PC-3 (cell line): ENCODE measurements at regions of chr13 and their contacts with region 1.

Region 1: GRCh38 chr13:48975856-48976575 is at the start of gene FNDC3A:
- DNase-seq: peak; percentile 63
- ATAC-seq: peak; percentile 78
- H3K4me3 ChIP-seq: peak within 1 kb of the TSS; percentile 80
- H3K27ac ChIP-seq: peak within 1 kb of the TSS; percentile 93
- H3K4me1 ChIP-seq: peaks cover 14% of the 10 kb centered on the region; the same call in 1 of the 2 replicates
- H3K27me3 ChIP-seq: no peaks in the 10 kb centered on the region
- CTCF ChIP-seq: no peak
- total RNA-seq, gene FNDC3A: 13.3 and 15.6 TPM in 2 replicates

Region 2: DNA sequence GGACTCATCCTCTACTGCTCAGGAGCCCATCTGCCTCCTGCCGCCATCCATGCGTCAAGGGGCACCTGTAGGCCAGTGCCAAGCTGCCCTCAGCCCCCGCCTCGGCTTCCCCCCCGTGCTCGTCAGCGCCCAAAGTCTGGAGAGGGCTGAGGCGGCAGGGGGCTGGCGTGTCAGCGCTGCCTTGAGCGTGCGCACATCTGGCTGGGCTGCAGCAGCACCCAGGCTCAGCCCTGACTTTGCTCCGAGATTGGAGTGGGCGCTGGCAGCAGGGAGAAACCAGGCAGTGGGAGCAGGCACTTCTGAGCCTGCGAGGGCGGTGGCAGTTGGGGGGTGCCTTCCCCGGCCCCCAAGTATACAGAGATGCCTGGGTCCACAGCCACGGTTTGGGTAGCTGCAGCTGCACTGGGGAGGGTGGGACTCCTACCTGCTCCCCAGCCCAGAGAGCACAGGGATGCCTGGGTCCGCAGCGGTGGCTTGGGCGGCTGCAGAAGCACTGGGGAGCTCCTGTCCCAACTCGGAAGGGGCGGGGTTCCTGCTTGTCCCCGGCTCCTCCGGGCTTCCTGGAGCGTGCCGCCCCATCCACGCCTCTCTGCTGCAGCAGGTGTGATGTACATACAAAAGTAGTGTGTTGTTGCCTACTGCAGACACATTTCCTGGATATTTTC is 518.3 kb before region 1 on chr13:
- CTCF ChIA-PET with region 1: no interaction called
- POLR2A ChIA-PET with region 1: no interaction called
- intact Hi-C with region 1: no loop called
- DNase-seq: no peak
- ATAC-seq: no peak
- H3K4me3 ChIP-seq: no peak overlapping the region
- H3K27ac ChIP-seq: no peak overlapping the region
- H3K4me1 ChIP-seq: no peaks in the 10 kb centered on the region
- H3K27me3 ChIP-seq: no peaks in the 10 kb centered on the region
- CTCF ChIP-seq: no peak

Region 3: GRCh38 chr13:48775804-48776203 is 200.2 kb before region 1 on chr13:
- CTCF ChIA-PET with region 1: no interaction called
- POLR2A ChIA-PET with region 1: no interaction called
- intact Hi-C with region 1: loop called (anchors 5 kb)
- DNase-seq: peak; percentile 67
- ATAC-seq: no peak
- H3K4me3 ChIP-seq: no peak overlapping the region
- H3K27ac ChIP-seq: no peak overlapping the region
- H3K4me1 ChIP-seq: peaks cover 14% of the 10 kb centered on the region
- H3K27me3 ChIP-seq: no peaks in the 10 kb centered on the region
- CTCF ChIP-seq: no peak

Region 4: GRCh38 chr13:48828962-48829421 is 147.0 kb before region 1 on chr13:
- CTCF ChIA-PET with region 1: no interaction called
- POLR2A ChIA-PET with region 1: interaction called, 3 read pairs
- intact Hi-C with region 1: loop called (anchors 5 kb)
- DNase-seq: peak; percentile 64
- ATAC-seq: peak; percentile 59
- H3K4me3 ChIP-seq: no peak overlapping the region
- H3K27ac ChIP-seq: peak overlapping the region; percentile 58
- H3K4me1 ChIP-seq: peaks cover 30% of the 10 kb centered on the region
- H3K27me3 ChIP-seq: no peaks in the 10 kb centered on the region
- CTCF ChIP-seq: no peak

Region 5: DNA sequence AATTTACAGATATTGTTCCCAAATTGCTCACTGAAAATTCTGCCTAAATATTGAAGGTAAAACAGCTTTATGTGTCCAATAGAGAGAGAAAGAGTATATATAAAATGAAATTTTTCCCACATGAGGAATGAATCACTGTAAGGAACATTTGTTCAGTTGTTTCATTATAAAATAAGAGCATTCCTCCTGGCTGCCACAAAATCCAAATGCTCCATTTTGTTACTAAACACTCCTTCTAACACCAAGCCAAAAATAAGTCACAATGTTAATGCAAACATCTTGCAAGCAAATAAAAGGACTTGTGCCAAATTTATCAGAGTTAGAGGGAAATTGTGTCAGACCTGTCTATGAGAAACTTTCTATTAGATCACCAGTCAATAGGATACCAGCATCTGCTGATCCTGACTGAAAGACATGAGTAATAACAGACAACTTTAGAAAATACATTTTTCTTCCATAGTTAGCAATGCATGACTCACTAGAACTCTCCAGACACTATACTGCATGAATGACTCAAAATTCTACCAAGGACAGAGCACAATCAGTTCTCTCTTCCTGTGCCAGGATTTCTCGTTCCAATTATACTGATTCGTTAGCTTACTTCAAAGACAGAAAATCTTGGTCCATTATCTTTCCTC is 83.8 kb before region 1 on chr13:
- CTCF ChIA-PET with region 1: no interaction called
- POLR2A ChIA-PET with region 1: no interaction called
- intact Hi-C with region 1: loop called (anchors 5 kb)
- DNase-seq: peak; percentile 86
- ATAC-seq: peak; percentile 95
- H3K4me3 ChIP-seq: no peak overlapping the region
- H3K27ac ChIP-seq: peak overlapping the region; percentile 99
- H3K4me1 ChIP-seq: peaks cover 20% of the 10 kb centered on the region
- H3K27me3 ChIP-seq: no peaks in the 10 kb centered on the region
- CTCF ChIP-seq: no peak

Region 6: GRCh38 chr13:49086711-49087110 is 110.7 kb after region 1 on chr13:
- CTCF ChIA-PET with region 1: interaction called, 4 read pairs
- POLR2A ChIA-PET with region 1: interaction called, 3 read pairs
- intact Hi-C with region 1: loop called (anchors 2 kb)
- DNase-seq: peak; percentile 78
- ATAC-seq: peak; percentile 90
- H3K4me3 ChIP-seq: no peak overlapping the region
- H3K27ac ChIP-seq: peak overlapping the region; percentile 88
- H3K4me1 ChIP-seq: peaks cover 16% of the 10 kb centered on the region
- H3K27me3 ChIP-seq: no peaks in the 10 kb centered on the region
- CTCF ChIP-seq: no peak

Region 7: GRCh38 chr13:49098771-49099512 is 122.9 kb after region 1 on chr13:
- CTCF ChIA-PET with region 1: no interaction called
- POLR2A ChIA-PET with region 1: no interaction called
- intact Hi-C with region 1: loop called (anchors 2 kb)
- DNase-seq: no peak
- ATAC-seq: no peak
- H3K4me3 ChIP-seq: peak overlapping the region; percentile 36; the same call in 1 of the 2 replicates
- H3K27ac ChIP-seq: peak overlapping the region; percentile 100
- H3K4me1 ChIP-seq: peaks cover 30% of the 10 kb centered on the region
- H3K27me3 ChIP-seq: no peaks in the 10 kb centered on the region
- CTCF ChIP-seq: peak; percentile 70

Region 8: GRCh38 chr13:49278211-49278610 is 302.2 kb after region 1 on chr13:
- CTCF ChIA-PET with region 1: no interaction called
- POLR2A ChIA-PET with region 1: no interaction called
- intact Hi-C with region 1: loop called (anchors 10 kb)
- DNase-seq: no peak
- ATAC-seq: no peak
- H3K4me3 ChIP-seq: no peak overlapping the region
- H3K27ac ChIP-seq: no peak overlapping the region
- H3K4me1 ChIP-seq: no peaks in the 10 kb centered on the region
- H3K27me3 ChIP-seq: no peaks in the 10 kb centered on the region
- CTCF ChIP-seq: no peak